AG04450 (cell line): ENCODE measurements at regions of chr1 and their contacts with region 1.

Region 1: GRCh38 chr1:12658531-12659453 is 14.9 kb downstream of the AADACL4 start:
- DNase-seq: peak; percentile 55
- H3K4me3 ChIP-seq: no peak overlapping the region
- H3K27ac ChIP-seq: no peak overlapping the region
- H3K27me3 ChIP-seq: peaks cover 14% of the 10 kb centered on the region
- CTCF ChIP-seq: peak; percentile 94

Region 2: GRCh38 chr1:12275369-12275768 is 383.4 kb before region 1 on chr1:
- CTCF ChIA-PET with region 1: interaction called, 72 read pairs
- POLR2A ChIA-PET with region 1: no interaction called
- DNase-seq: no peak
- H3K4me3 ChIP-seq: no peak overlapping the region
- H3K27ac ChIP-seq: no peak overlapping the region
- H3K27me3 ChIP-seq: no peaks in the 10 kb centered on the region
- CTCF ChIP-seq: peak; percentile 81

Region 3: DNA sequence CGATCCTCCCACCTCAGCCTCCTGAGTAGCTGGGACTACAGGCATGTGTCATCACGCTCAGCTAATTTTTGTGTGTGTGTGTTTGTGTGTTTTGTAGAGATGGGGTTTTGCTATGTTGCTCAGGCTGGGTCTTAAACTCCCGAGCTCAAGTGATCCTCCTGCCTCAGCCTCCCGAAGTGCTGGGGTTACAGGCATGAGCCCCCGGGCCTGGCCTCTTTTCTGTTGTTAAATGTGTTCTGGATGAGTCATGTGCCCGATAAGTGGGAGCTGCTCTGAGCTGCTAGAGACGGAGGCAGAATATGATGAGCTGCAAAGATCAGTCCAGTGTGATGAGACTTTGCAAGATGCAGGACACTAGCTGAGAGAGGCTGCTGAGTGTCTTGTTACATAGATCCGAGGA is 353.4 kb before region 1 on chr1:
- CTCF ChIA-PET with region 1: interaction called, 131 read pairs
- POLR2A ChIA-PET with region 1: no interaction called
- DNase-seq: no peak
- H3K4me3 ChIP-seq: no peak overlapping the region
- H3K27ac ChIP-seq: no peak overlapping the region
- H3K27me3 ChIP-seq: no peaks in the 10 kb centered on the region
- CTCF ChIP-seq: no peak

Region 4: DNA sequence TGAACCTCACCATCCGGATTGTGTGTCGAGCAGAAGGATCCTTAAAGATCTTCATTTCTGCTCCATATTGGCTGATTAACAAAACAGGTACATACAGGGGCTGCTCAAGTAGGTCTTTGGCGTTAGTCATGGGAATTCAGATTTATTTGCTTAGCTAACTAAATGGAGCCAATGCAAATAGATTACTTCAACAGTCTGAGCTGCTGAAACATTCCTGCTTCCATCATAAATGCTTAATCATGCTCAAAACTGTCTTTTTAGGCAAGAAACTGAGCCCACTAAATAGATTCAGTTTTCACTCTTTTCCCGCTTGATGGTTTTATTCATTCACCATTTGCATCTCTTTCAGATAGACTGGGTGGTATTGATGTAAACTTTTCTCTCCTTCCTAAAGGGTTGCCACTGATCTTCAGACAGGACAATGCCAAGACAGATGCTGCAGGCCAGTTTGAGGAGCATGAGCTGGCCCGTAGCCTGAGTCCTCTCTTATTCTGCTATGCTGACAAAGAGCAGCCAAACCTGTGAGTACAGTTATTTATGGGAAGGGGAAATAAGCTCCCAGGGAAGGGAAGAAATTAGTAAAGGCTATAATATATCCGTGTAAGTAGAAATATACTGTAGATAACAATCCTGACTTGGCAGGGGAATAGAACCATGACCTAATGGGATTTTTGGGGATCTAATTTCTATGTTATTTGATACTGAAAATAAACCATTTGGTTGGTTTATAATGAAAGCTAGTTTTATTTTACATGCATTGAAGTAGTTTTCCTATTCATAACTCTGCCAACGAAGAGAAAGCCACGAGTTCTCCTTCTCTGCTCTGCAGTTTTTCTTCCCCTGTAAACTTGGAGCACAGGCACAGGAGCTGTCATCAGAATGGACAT is 302.5 kb before region 1 on chr1:
- CTCF ChIA-PET with region 1: interaction called, 15 read pairs
- POLR2A ChIA-PET with region 1: no interaction called
- DNase-seq: no peak
- H3K4me3 ChIP-seq: no peak overlapping the region
- H3K27ac ChIP-seq: peak overlapping the region; percentile 83
- H3K27me3 ChIP-seq: no peaks in the 10 kb centered on the region
- CTCF ChIP-seq: no peak

Region 5: GRCh38 chr1:12608311-12608957 is 50.4 kb before region 1 on chr1:
- CTCF ChIA-PET with region 1: no interaction called
- POLR2A ChIA-PET with region 1: no interaction called
- DNase-seq: no peak
- H3K4me3 ChIP-seq: no peak overlapping the region
- H3K27ac ChIP-seq: no peak overlapping the region
- H3K27me3 ChIP-seq: no peaks in the 10 kb centered on the region
- CTCF ChIP-seq: no peak

Region 6: GRCh38 chr1:12619792-12620487 is 38.9 kb before region 1 on chr1:
- CTCF ChIA-PET with region 1: interaction called, 30 read pairs
- POLR2A ChIA-PET with region 1: no interaction called
- DNase-seq: peak; percentile 77
- H3K4me3 ChIP-seq: peak overlapping the region; percentile 83
- H3K27ac ChIP-seq: no peak overlapping the region
- H3K27me3 ChIP-seq: peaks cover 9% of the 10 kb centered on the region
- CTCF ChIP-seq: peak; percentile 94

Region 7: DNA sequence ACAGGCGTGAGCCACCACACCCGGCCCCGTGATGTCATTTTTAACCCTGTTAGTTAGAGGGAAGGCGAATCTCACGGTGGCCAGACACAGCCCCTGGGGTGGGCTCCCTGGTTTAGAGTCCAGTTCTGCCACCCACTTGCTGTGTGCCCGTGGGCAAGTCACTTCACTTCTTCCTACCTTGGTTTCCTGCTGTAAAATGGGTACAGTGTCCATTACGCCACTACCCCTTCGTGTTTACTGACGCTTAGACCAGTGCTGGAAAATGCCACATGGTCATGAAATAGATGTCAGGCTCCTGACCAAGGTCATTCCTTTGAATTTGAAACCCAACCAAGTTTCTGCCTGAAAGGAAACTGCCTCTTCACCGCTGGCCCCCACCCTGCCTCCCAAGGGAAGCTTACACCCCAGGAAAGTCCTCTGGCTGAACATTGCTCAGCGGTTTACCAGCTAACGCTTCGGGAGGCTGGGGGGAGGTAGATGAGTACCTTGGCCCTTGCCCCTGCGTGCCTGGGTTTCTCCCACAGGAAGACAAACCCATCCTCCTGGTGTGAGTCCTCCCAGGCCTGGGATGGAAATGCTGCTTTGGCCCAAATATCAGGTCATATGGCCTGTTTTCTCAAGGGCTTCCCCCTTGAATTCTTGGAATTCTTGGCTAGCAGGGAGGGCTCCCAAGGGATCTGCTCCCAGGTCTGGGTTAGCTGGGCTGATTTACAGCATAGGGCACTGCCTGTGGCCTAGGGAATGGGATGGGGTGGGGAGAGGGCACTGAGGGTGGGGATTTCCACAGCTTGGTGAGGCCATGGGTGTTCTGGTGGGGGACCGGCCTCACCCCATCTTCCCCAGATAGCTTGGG is 22.5 kb before region 1 on chr1:
- CTCF ChIA-PET with region 1: interaction called, 10 read pairs
- POLR2A ChIA-PET with region 1: no interaction called
- DNase-seq: no peak
- H3K4me3 ChIP-seq: no peak overlapping the region
- H3K27ac ChIP-seq: no peak overlapping the region
- H3K27me3 ChIP-seq: peaks cover 10% of the 10 kb centered on the region
- CTCF ChIP-seq: no peak